ENCODE measurements at regions of chr18 and their contacts with region 1.

Region 1: DNA sequence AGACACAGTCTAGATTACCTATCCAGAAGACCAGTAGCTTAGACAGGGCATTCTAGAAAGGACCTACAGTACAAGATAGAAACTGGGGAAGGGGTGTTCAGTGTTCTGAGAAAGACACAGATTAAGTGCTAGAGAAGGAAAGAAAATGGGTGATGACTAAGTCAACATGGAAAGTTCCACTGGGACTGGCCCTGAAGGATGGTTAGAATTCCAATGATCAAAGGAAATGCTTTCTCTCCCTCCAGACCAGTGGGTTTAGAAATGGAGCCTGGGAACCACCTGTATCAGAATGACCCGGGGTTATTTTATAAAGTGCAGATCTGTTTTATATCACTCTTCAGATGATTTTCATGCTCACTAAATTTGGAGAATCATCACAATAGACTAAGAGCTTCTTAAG is 5.8 kb upstream of the COLEC12 start:
- DNase-seq: no peak
- ATAC-seq: no peak
- H3K4me3 Mint-ChIP-seq: no peak overlapping the region
- H3K27ac Mint-ChIP-seq: no peak overlapping the region
- H3K4me1 Mint-ChIP-seq: no peaks in the 10 kb centered on the region
- H3K27me3 Mint-ChIP-seq: peaks cover 3% of the 10 kb centered on the region
- CTCF ChIP-seq: no peak

Region 2: GRCh38 chr18:434410-434809 is 71.9 kb before region 1 on chr18:
- CTCF ChIA-PET with region 1: no interaction called
- POLR2A ChIA-PET with region 1: no interaction called
- intact Hi-C with region 1: no loop called
- DNase-seq: no peak
- ATAC-seq: no peak
- H3K4me3 Mint-ChIP-seq: no peak overlapping the region
- H3K27ac Mint-ChIP-seq: no peak overlapping the region
- H3K4me1 Mint-ChIP-seq: no peaks in the 10 kb centered on the region
- H3K27me3 Mint-ChIP-seq: peaks cover 7% of the 10 kb centered on the region
- CTCF ChIP-seq: no peak

Region 3: GRCh38 chr18:495017-495416 is 11.2 kb before region 1 on chr18:
- CTCF ChIA-PET with region 1: interaction called, 11 read pairs
- POLR2A ChIA-PET with region 1: interaction called, 3 read pairs
- intact Hi-C with region 1: no loop called
- DNase-seq: no peak
- ATAC-seq: no peak
- H3K4me3 Mint-ChIP-seq: no peak overlapping the region
- H3K27ac Mint-ChIP-seq: no peak overlapping the region
- H3K4me1 Mint-ChIP-seq: peaks cover 2% of the 10 kb centered on the region
- H3K27me3 Mint-ChIP-seq: peaks cover 36% of the 10 kb centered on the region
- CTCF ChIP-seq: no peak

Region 4: GRCh38 chr18:607930-608329 is 101.7 kb after region 1 on chr18:
- CTCF ChIA-PET with region 1: no interaction called
- POLR2A ChIA-PET with region 1: no interaction called
- intact Hi-C with region 1: no loop called
- DNase-seq: no peak
- ATAC-seq: no peak
- H3K4me3 Mint-ChIP-seq: no peak overlapping the region
- H3K27ac Mint-ChIP-seq: no peak overlapping the region
- H3K4me1 Mint-ChIP-seq: no peaks in the 10 kb centered on the region
- H3K27me3 Mint-ChIP-seq: no peaks in the 10 kb centered on the region
- CTCF ChIP-seq: no peak